B cell (primary cell): ENCODE measurements at regions of chr6 and their contacts with region 1.

Region 1: GRCh38 chr6:32785781-32786533 is 22.6 kb upstream of the HLA-DQB2 start:
- DNase-seq: peak; percentile 77
- ATAC-seq: no peak
- H3K4me3 ChIP-seq: no peak overlapping the region
- H3K4me3 Mint-ChIP-seq: no peak overlapping the region
- H3K27ac ChIP-seq: no peak overlapping the region
- H3K27ac Mint-ChIP-seq: no peak overlapping the region
- H3K4me1 ChIP-seq: no peaks in the 10 kb centered on the region
- H3K4me1 Mint-ChIP-seq: peaks cover 2% of the 10 kb centered on the region
- H3K27me3 ChIP-seq: no peaks in the 10 kb centered on the region
- H3K27me3 Mint-ChIP-seq: no peaks in the 10 kb centered on the region
- CTCF ChIP-seq: peak; percentile 82

Region 2: GRCh38 chr6:32118782-32119628 is 667.0 kb before region 1 on chr6:
- CTCF ChIA-PET with region 1: interaction called, 16 read pairs
- POLR2A ChIA-PET with region 1: no interaction called
- intact Hi-C with region 1: loop called (anchors 10 kb)
- DNase-seq: peak; percentile 77
- ATAC-seq: peak; percentile 85
- H3K4me3 ChIP-seq: no peak overlapping the region
- H3K4me3 Mint-ChIP-seq: no peak overlapping the region
- H3K27ac ChIP-seq: no peak overlapping the region
- H3K27ac Mint-ChIP-seq: no peak overlapping the region
- H3K4me1 ChIP-seq: peaks cover 0 to 3% of the 10 kb centered on the region in 2 donors
- H3K4me1 Mint-ChIP-seq: peaks cover 7% of the 10 kb centered on the region
- H3K27me3 ChIP-seq: no peaks in the 10 kb centered on the region
- H3K27me3 Mint-ChIP-seq: no peaks in the 10 kb centered on the region
- CTCF ChIP-seq: peak; percentile 95

Region 3: DNA sequence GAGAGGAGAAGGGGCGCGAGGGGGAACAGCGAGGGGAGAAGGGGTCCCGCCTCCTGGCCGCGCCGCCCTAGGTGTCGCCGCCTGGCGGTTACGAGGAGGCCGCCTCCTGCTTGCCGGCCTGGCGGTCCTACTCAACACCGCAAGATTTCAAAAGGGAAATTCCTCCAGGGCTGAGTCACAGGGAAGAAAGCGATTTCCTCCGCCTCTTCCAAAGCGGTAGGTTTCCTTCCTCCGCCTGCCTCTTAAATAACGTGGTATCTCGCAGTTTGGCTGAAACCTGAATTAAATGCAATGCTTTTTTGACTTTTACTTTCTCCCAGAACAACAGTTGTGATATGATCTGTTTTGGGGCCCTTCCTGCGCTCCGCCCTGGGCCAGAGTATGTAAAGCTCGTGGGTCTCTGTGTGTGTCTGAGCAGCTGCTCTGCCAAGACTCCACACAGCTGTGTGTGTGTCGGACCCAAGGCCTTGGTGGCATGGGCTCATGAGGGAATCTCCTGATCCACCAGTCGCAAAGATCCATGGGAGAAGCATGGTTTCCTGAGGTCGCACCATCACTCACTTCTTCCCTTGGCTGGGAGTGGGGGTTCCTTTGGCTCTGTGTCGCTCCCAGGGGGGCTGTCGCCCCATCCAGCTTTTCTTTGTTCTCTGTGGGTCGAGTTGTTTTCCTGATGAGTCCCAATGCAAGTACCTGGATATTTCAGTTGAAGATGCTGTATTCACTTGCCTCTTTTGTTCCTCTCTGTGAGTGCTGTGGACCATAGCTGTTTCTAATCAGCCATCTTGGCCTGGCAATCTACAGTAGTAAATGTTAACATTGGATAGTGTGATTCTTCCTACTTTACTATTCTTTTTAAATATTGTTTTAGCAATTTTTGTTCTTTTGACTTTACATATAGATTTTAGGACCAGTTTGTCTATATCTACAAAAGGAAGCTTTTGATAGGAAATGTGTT is 530.5 kb before region 1 on chr6:
- CTCF ChIA-PET with region 1: interaction called, 16 read pairs
- POLR2A ChIA-PET with region 1: no interaction called
- intact Hi-C with region 1: no loop called
- DNase-seq: peak; percentile 79
- ATAC-seq: peak; percentile 75
- H3K4me3 ChIP-seq: peak overlapping the region in 4 of 5 experiments; percentile 32 to 81 (median 60)
- H3K4me3 Mint-ChIP-seq: peak overlapping the region; percentile 83
- H3K27ac ChIP-seq: peak overlapping the region; percentile 58 to 89
- H3K27ac Mint-ChIP-seq: peak overlapping the region; percentile 90
- H3K4me1 ChIP-seq: peaks cover 25 to 34% of the 10 kb centered on the region in 2 donors
- H3K4me1 Mint-ChIP-seq: peaks cover 72% of the 10 kb centered on the region
- H3K27me3 ChIP-seq: no peaks in the 10 kb centered on the region
- H3K27me3 Mint-ChIP-seq: no peaks in the 10 kb centered on the region
- CTCF ChIP-seq: peak; percentile 73

Region 4: DNA sequence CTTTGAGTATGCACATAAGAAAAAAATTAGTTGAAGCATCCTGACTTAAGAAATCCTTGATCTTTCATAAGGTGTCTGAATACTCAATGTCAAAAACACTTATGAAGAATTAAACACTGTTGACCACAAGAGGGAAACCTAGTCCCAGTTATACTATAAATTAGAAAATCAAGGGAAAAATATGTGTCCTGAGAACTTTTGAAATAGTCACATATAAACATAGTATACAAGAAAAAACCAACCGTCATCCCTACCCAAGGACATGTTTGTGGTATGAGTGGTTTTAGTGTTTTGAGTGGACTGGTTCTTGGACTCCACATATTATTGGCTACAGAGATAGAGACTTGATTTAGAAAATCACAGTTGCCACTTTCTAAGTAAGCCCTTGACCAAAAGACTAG is 353.9 kb before region 1 on chr6:
- CTCF ChIA-PET with region 1: interaction called, 58 read pairs
- POLR2A ChIA-PET with region 1: no interaction called
- intact Hi-C with region 1: loop called (anchors 1 kb)
- DNase-seq: peak; percentile 78
- ATAC-seq: peak; percentile 38
- H3K4me3 ChIP-seq: no peak overlapping the region
- H3K4me3 Mint-ChIP-seq: no peak overlapping the region
- H3K27ac ChIP-seq: no peak overlapping the region
- H3K27ac Mint-ChIP-seq: peak overlapping the region; percentile 63
- H3K4me1 ChIP-seq: peaks cover 21 to 27% of the 10 kb centered on the region in 2 donors
- H3K4me1 Mint-ChIP-seq: peaks cover 32% of the 10 kb centered on the region
- H3K27me3 ChIP-seq: no peaks in the 10 kb centered on the region
- H3K27me3 Mint-ChIP-seq: no peaks in the 10 kb centered on the region
- CTCF ChIP-seq: peak; percentile 83

Region 5: DNA sequence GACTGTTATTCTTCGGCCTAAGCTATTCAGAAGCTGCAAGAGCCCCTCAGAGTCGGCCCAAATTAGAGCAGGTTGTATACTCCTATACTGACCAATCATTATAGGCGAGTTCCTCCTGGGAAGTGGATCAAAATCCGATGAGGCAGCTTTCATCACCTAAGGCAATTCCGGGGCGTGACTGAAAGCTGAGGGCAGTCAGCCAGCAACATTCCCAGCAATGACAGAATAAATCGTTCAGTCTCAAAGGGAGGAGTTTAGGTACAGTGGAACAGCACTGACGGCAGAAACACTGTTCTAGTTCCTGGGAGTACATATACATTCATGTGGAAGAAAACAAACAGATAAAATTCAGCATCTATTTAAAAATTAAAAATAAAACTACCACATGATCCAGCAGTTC is 33.4 kb before region 1 on chr6:
- CTCF ChIA-PET with region 1: no interaction called
- POLR2A ChIA-PET with region 1: no interaction called
- intact Hi-C with region 1: no loop called
- DNase-seq: no peak
- ATAC-seq: no peak
- H3K4me3 ChIP-seq: no peak overlapping the region
- H3K4me3 Mint-ChIP-seq: no peak overlapping the region
- H3K27ac ChIP-seq: no peak overlapping the region
- H3K27ac Mint-ChIP-seq: no peak overlapping the region
- H3K4me1 ChIP-seq: peaks cover 0 to 2% of the 10 kb centered on the region in 2 donors
- H3K4me1 Mint-ChIP-seq: peaks cover 1% of the 10 kb centered on the region
- H3K27me3 ChIP-seq: peaks cover 0 to 5% (median 0%) of the 10 kb centered on the region in 4 experiments
- H3K27me3 Mint-ChIP-seq: peaks cover 26% of the 10 kb centered on the region
- CTCF ChIP-seq: no peak

Region 6: GRCh38 chr6:32774426-32774825 is 11.5 kb before region 1 on chr6:
- CTCF ChIA-PET with region 1: interaction called, 16 read pairs
- POLR2A ChIA-PET with region 1: no interaction called
- intact Hi-C with region 1: no loop called
- DNase-seq: peak; percentile 42
- ATAC-seq: peak; percentile 54
- H3K4me3 ChIP-seq: no peak overlapping the region
- H3K4me3 Mint-ChIP-seq: no peak overlapping the region
- H3K27ac ChIP-seq: no peak overlapping the region
- H3K27ac Mint-ChIP-seq: no peak overlapping the region
- H3K4me1 ChIP-seq: peaks cover 0 to 4% of the 10 kb centered on the region in 2 donors
- H3K4me1 Mint-ChIP-seq: peaks cover 4% of the 10 kb centered on the region
- H3K27me3 ChIP-seq: peaks cover 0 to 6% (median 2%) of the 10 kb centered on the region in 4 experiments
- H3K27me3 Mint-ChIP-seq: peaks cover 13% of the 10 kb centered on the region
- CTCF ChIP-seq: no peak

Region 7: GRCh38 chr6:32838114-32838958 is 52.4 kb after region 1 on chr6 and contains the start of gene TAP2:
- CTCF ChIA-PET with region 1: interaction called, 10 read pairs
- POLR2A ChIA-PET with region 1: no interaction called
- intact Hi-C with region 1: no loop called
- DNase-seq: peak; percentile 97
- ATAC-seq: peak; percentile 84
- H3K4me3 ChIP-seq: peak within 1 kb of the TSS; percentile 71 to 80 (median 76)
- H3K4me3 Mint-ChIP-seq: peak within 1 kb of the TSS; percentile 97
- H3K27ac ChIP-seq: peak within 1 kb of the TSS; percentile 83 to 97
- H3K27ac Mint-ChIP-seq: peak within 1 kb of the TSS; percentile 99
- H3K4me1 ChIP-seq: peaks cover 59 to 73% of the 10 kb centered on the region in 2 donors
- H3K4me1 Mint-ChIP-seq: peaks cover 92% of the 10 kb centered on the region
- H3K27me3 ChIP-seq: no peaks in the 10 kb centered on the region
- H3K27me3 Mint-ChIP-seq: no peaks in the 10 kb centered on the region
- CTCF ChIP-seq: peak; percentile 90
- total RNA-seq, gene TAP2: 126 and 135 TPM in 2 replicates